ENCODE measurements at regions of chr1 and their contacts with region 1.

Region 1: DNA sequence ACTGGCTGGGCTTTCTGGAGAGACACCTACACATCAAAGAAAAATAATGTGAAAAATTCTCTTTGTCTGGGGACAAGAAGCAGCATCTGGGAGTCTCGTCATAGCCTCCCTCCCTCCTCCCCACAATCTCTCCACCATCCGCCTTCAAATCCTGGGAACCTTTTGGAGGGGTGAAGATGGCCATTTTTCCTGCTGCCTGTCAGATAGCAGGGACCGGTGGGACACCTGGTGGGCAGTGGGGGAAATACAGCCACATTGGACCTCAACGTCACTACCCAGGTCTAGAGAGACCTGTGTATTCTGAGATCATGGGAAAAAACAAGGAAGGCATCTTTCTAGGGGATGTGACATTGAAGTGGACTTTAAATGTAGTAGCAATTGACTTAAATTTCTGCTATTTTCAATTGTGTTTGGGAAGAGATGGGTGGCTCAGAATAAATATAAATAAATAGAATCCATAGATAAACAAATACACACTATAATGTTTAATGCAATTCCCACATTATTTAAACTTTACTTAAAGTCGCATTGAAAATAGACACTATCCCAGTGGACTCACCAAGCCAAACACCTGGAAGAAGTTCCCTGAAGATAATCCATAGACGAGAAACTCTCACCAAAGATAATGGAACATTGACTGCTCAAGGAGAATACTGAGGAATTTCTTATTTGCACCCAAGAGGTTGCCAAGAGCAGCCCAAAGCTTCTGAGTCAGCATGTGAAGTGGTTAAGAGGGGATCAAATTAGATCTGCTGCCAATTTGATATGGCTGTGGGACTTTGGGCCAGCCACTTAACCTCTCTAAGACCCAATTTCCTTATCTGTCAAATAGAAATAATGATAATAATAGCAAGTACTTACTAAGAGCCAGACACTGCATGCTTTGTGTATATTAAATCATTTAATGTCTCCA is 147.6 kb upstream of the CAMK1G start:
- DNase-seq: peak; percentile 98
- ATAC-seq: peak; percentile 81
- H3K4me3 ChIP-seq: no peak overlapping the region
- H3K27ac ChIP-seq: peak overlapping the region; percentile 88
- H3K4me1 ChIP-seq: peaks cover 53% of the 10 kb centered on the region
- H3K27me3 ChIP-seq: no peaks in the 10 kb centered on the region
- CTCF ChIP-seq: peak; percentile 98

Region 2: GRCh38 chr1:208934933-208935332 is 501.0 kb before region 1 on chr1:
- CTCF ChIA-PET with region 1: no interaction called
- POLR2A ChIA-PET with region 1: interaction called, 37 read pairs
- intact Hi-C with region 1: no loop called
- DNase-seq: peak; percentile 96
- ATAC-seq: peak; percentile 79
- H3K4me3 ChIP-seq: no peak overlapping the region
- H3K27ac ChIP-seq: peak overlapping the region; percentile 95
- H3K4me1 ChIP-seq: peaks cover 48% of the 10 kb centered on the region
- H3K27me3 ChIP-seq: no peaks in the 10 kb centered on the region
- CTCF ChIP-seq: no peak

Region 3: DNA sequence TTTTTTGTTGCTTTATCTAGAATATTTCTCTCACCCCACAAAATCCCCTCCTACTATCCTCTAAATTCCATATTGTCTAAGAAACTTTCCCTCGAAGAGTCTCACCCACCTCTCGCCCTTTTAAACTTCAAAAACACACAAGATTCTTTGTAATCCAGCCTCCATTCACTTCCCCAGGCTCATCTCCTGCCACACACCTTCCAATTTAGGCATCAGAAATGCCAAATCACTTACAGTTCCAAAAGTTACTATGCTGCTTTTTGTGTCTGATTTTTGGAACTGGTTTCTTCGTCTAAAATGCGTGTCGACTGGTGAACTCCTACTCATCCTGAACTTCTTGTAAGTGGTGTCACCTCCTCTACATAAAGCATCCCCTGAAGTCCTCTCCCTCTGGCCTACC is 334.8 kb before region 1 on chr1:
- CTCF ChIA-PET with region 1: interaction called, 10 read pairs
- POLR2A ChIA-PET with region 1: no interaction called
- intact Hi-C with region 1: no loop called
- DNase-seq: no peak
- ATAC-seq: no peak
- H3K4me3 ChIP-seq: no peak overlapping the region
- H3K27ac ChIP-seq: no peak overlapping the region
- H3K4me1 ChIP-seq: peaks cover 16% of the 10 kb centered on the region
- H3K27me3 ChIP-seq: no peaks in the 10 kb centered on the region
- CTCF ChIP-seq: no peak

Region 4: DNA sequence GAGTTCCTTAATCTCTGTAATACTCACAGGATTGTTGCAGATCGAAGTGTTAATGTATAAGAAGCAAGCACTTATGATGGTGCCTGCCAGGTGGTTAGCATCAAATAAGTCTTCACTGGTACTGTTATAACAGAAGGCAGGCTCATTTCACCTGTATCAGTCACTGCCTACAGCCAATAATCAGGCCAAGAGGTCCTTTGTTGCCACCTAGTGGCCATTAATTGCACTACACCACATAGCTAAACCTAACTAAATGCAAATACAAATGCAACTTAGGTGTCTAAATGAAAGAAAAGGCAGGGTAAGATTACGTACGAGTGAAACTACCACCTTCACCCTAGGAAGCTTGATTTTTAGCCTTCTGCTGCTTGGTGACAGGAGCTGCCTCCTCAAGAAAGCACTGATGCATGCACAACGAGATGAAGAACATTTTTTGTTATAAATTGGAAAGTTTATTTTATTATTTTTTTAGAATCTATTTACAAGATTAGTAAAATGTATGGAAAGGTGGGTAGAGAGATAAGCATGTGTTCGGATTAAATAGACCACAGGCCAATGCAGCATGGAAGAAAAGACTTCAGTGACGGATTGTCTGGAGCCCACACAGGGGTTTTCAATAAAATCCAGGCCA is 187.1 kb before region 1 on chr1:
- CTCF ChIA-PET with region 1: no interaction called
- POLR2A ChIA-PET with region 1: no interaction called
- intact Hi-C with region 1: loop called (anchors 1 kb)
- DNase-seq: peak; percentile 97
- ATAC-seq: peak; percentile 58
- H3K4me3 ChIP-seq: no peak overlapping the region
- H3K27ac ChIP-seq: no peak overlapping the region
- H3K4me1 ChIP-seq: peaks cover 44% of the 10 kb centered on the region
- H3K27me3 ChIP-seq: no peaks in the 10 kb centered on the region
- CTCF ChIP-seq: peak; percentile 98

Region 5: DNA sequence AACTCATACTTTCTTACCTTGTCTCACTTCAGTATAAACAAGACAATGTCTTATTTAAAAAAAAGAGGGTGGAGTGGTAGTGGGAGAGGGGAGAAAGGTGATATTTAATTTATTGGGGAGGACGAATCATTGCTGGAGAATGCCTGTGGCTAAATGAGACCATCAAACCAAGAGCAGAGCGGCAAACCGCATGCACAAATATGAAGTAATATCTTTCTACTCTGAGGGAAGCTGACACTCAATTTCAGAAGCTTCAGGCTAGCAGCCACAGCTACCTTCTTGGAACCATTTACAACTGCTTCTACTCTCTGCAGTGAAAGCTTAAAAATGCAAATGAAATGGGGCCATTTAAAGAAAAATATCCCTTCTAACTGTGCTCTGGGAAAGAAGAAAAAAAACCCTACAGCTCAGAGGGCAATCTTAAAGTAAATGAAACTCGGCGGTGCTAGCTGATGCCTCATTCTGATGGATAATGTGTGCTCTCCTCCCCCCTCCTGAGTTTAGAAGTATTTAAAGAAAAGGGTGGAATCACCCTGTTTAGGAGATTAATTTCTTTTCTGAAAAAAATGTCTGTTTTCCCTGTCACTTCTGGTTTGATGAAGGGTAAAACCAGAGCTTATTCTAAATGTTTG is 30.6 kb before region 1 on chr1:
- CTCF ChIA-PET with region 1: interaction called, 5 read pairs
- POLR2A ChIA-PET with region 1: interaction called, 3 read pairs
- intact Hi-C with region 1: loop called (anchors 1 kb)
- DNase-seq: peak; percentile 94
- ATAC-seq: peak; percentile 41
- H3K4me3 ChIP-seq: peak overlapping the region; percentile 53
- H3K27ac ChIP-seq: peak overlapping the region; percentile 96
- H3K4me1 ChIP-seq: peaks cover 71% of the 10 kb centered on the region
- H3K27me3 ChIP-seq: no peaks in the 10 kb centered on the region
- CTCF ChIP-seq: no peak

Measured in PC-3 (cell line).